ENCODE measurements at regions of chr12 and their contacts with region 1.

Region 1: DNA sequence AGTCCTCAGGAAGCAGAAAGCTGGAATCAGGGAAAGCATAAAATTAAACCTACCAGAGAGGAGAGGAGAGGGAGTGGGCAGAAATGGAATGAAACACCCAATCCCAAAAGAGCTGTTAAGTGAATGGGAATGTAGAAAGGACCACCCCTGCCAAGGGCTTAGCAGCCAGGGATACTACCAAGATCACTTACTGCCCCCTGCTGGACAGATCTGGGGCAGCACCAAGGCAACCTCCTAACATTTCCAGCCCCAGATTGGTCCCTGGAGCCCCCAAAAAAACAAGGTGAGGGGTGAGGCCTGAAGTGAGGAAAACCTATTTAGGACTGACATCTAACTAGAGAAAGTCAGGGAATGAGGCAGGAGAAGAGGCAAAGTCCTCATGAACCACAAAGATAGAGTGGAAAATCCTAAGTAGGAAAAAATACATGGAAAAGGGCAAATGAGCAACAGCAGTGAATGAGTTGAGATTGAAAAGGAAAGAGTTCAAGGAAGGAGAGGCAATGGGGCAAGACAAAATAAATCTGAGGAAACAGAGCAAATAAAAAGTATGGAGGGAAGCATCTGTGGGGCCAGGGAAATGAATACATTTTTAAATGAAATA is 11.2 kb upstream of the FKBP11 start:
- DNase-seq: peak; percentile 69 to 70
- ATAC-seq: peak; percentile 48 to 84 (median 62)
- H3K4me3 ChIP-seq: no peak overlapping the region
- H3K27ac ChIP-seq: no peak overlapping the region
- H3K4me1 ChIP-seq: peaks cover 0 to 16% (median 0%) of the 10 kb centered on the region in 9 donors
- H3K27me3 ChIP-seq: no peaks in the 10 kb centered on the region
- CTCF ChIP-seq: peak; percentile 84 to 96 (median 89)

Region 2: DNA sequence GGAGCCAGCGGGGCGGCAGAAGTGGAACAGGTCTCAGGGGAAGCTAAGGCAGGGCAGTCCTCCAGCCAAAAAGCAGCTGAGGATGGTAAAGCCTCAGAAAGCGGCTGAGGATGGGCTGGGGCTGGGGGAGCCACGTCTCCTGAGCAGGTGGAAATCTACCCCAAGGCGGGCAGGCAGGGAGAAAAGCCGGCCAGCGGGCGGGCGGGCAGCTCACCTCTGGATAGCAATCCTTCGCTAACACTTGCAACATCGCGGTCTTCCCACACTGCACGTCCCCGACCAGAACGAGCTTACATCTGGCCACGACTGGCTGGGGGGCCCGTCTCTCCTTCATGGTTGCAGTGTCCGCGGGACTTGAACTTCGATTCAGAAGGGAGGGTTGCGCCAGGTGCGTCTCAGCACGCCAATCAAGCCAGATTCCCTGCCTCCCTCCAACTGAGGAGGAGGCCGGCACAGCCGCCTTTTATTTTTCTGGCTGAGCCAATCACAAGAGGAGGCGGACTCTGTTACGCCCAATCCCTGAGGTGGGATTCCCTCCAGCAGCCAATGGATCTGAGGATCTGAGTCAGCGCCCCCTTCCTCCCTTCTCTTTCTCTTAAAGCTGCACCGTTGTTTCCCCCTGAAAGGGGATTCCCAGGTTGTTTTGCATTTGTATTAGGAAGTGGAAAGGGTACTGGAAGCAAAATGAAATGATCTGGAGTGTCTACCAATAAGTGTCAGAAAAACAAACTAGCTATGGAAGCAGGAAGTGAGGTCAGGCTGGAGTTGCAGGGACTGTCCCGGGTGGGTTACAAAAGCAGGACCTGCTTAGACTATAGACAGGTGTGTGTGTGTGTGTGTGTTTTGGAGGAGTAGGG is 70.8 kb before region 1 on chr12 and contains the start of gene RND1:
- intact Hi-C with region 1: loop called in 1 of 10 experiments (anchors 10 kb)
- DNase-seq: peak; percentile 80 to 93
- ATAC-seq: peak; percentile 94 to 100 (median 99)
- H3K4me3 ChIP-seq: peak within 1 kb of the TSS; percentile 49 to 92 (median 60)
- H3K27ac ChIP-seq: peak within 1 kb of the TSS in 4 of 10 donors; percentile 31 to 58 (median 48)
- H3K4me1 ChIP-seq: peaks cover 0 to 15% (median 6%) of the 10 kb centered on the region in 9 donors
- H3K27me3 ChIP-seq: peaks cover 0 to 33% (median 0%) of the 10 kb centered on the region in 7 donors
- CTCF ChIP-seq: peak in 3 of 9 donors; percentile 24 to 36 (median 32)
- total RNA-seq, gene RND1: 0.21 to 3.3 (median 0.95) TPM

Region 3: GRCh38 chr12:48890657-48891418 is 45.6 kb before region 1 on chr12:
- intact Hi-C with region 1: no loop called
- DNase-seq: peak; percentile 75 to 82
- ATAC-seq: peak; percentile 96 to 99 (median 98)
- H3K4me3 ChIP-seq: peak overlapping the region in 8 of 10 donors; percentile 19 to 41 (median 35)
- H3K27ac ChIP-seq: no peak overlapping the region
- H3K4me1 ChIP-seq: peaks cover 0 to 11% (median 8%) of the 10 kb centered on the region in 9 donors
- H3K27me3 ChIP-seq: peaks cover 0 to 21% (median 5%) of the 10 kb centered on the region in 7 donors
- CTCF ChIP-seq: peak; percentile 84 to 98 (median 95)

Region 4: DNA sequence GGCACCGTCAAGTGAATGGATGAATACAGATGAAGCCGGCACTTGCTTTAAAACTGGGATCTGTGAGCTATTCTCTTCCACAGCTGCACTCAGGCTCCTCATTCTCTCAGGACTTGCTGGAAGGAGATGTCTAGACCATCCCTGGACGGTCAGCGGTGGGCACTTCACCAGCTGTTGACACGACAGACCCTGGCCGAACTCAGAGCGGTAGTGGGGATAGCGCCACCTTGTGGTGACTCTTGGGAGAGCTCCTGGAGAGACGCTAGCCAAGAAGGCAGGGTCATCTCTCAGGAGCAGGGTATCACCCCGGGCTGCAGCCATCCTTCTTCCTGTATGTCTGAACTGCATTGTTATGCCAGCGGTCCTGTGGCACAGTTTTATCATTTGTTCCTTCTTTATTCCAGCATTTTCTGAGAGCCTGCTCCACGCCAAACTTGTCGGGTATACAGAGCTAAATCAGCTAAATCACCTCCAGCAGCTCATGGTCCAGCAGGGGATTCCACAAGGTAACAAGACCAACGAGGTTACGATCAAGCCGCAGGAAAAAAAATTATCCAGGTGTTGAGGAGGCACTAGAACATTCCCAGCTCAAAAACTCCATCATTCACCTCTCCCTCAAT is 51.7 kb after region 1 on chr12:
- intact Hi-C with region 1: loop called in 1 of 10 experiments (anchors 10 kb)
- DNase-seq: peak in 1 of 2 donors; percentile 67
- ATAC-seq: peak in 7 of 8 donors; percentile 34 to 62 (median 54)
- H3K4me3 ChIP-seq: no peak overlapping the region
- H3K27ac ChIP-seq: no peak overlapping the region
- H3K4me1 ChIP-seq: peaks cover 0 to 20% (median 7%) of the 10 kb centered on the region in 9 donors
- H3K27me3 ChIP-seq: peaks cover 0 to 93% (median 67%) of the 10 kb centered on the region in 7 donors
- CTCF ChIP-seq: peak; percentile 71 to 95 (median 82)

Region 5: DNA sequence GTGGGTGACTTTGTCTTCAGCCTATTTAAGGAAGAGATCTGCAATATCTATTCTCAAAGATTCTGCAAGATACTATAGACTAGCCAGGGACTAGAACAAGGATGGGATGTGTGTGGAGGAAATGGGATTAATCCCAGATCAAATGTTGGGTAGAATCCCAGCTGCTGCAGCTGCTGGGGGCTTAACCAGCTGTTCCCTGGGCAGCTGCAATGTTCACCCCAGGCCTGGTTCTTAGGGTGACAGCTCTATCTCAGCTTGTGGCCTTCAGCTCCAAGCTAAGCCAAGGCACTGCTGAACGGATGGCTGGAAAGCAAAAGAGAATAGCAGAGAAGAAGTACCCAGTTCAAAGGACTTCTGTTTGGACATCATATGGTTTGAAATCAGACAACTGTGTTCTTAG is 143.3 kb after region 1 on chr12:
- intact Hi-C with region 1: no loop called
- DNase-seq: no peak
- ATAC-seq: no peak
- H3K4me3 ChIP-seq: no peak overlapping the region
- H3K27ac ChIP-seq: no peak overlapping the region
- H3K4me1 ChIP-seq: no peaks in the 10 kb centered on the region
- H3K27me3 ChIP-seq: no peaks in the 10 kb centered on the region
- CTCF ChIP-seq: no peak

Measured in heart right ventricle (tissue), 16 donors.